GM12878 (cell line): ENCODE measurements at regions of chr1 and their contacts with region 1.

Region 1: DNA sequence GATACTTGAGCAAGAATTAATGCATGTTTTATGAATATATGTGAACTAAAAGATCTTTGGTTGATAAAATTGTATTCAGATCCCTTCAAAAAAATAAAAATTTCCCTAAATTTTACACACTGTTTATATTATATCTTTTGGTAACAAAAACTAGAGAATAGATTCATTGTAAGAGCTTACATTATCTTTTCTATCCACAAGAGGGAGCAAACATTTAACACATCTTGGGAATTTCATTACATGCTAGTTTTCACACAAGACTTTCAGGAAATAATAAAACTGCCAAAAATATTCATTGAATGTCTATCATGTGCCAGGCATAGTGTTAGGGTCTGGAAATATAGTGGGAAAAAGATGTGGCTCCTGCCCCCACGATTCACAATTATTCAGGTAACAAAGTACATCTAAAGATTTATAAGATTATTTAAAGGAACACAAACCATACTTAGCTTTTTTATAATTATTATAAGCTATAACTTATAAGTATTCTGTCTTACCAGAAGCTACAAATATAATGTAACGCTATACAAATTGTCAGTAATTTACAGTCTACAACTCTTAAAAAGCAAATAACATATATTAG is 30.6 kb downstream of the FAF1 start:
- DNase-seq: no peak
- ATAC-seq: no peak; the same call in 2 of the 3 replicates
- H3K4me3 ChIP-seq: no peak overlapping the region
- H3K27ac ChIP-seq: no peak overlapping the region
- H3K4me1 ChIP-seq: peaks cover 3% of the 10 kb centered on the region
- H3K27me3 ChIP-seq: no peaks in the 10 kb centered on the region
- CTCF ChIP-seq: peak; percentile 29 to 53 (median 45); a peak in 4 of 6 replicates
- EP300 ChIP-seq: no peak
- POLR2A ChIP-seq: no peak
- RAD21 ChIP-seq: peak; percentile 52

Region 2: DNA sequence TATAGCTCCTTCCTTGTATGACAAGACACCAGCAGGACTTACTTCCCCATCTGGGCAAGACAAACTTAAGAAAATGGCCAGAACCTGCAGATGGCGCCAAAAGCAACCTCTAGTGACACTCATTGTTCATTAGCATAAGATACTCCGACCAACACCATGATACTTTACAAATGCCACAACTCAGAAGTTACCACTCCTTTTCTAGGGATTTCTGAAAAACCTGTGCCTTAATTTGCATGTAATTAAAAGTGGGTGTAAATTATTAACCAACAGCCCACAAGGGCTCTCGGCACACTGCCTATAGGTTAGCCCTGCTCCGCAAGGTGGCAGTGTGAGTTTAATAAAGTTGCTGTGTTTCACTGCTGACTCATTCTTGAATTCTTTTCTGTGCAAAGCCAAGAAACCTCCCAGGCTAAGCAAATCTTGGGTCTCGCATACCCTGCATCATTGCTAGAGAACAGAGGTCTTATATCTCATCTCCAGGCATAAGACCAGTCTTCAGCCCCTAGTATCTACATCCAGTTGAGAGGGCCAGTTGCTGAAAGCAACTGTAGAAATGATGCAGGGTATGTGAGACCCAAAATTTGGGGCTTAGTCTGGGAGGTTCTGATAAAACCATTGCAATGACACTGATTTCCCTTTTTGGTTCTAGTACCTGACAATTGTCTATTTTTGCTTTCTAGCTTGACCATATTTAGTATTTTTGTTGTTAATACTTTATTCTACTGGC is 55.8 kb before region 1 on chr1:
- CTCF ChIA-PET with region 1: interaction called, 28 read pairs
- POLR2A ChIA-PET with region 1: no interaction called
- RAD21 ChIA-PET with region 1: interaction called, 3 read pairs
- SMC1A ChIA-PET with region 1: interaction called, 4 read pairs
- in situ Hi-C with region 1: no loop called
- intact Hi-C with region 1: no loop called
- DNase-seq: peak; percentile 76
- ATAC-seq: peak; percentile 99
- H3K4me3 ChIP-seq: no peak overlapping the region
- H3K27ac ChIP-seq: peak overlapping the region; percentile 29; the same call in 1 of the 2 replicates
- H3K4me1 ChIP-seq: peaks cover 9% of the 10 kb centered on the region
- H3K27me3 ChIP-seq: no peaks in the 10 kb centered on the region
- CTCF ChIP-seq: peak; percentile 62 to 90 (median 62)
- EP300 ChIP-seq: no peak
- POLR2A ChIP-seq: no peak
- RAD21 ChIP-seq: peak; percentile 73

Region 3: DNA sequence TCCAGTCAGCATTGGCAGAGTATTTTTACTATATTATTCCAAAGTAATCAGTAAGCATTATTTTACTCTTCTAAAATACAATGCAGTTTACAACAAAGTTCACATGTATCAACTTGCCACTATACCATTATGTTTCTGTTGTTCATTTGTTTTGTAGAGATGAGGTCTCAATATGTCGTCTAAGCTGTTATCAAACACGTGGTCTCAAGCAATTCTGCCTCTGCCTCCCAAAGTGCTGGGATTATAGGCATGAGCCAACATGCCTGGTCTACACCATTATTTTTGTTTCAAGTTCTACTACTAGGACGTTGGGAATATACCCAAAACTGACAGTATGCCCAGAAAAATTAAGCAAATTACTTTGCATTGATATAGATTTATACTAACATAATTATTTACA is 10.8 kb after region 1 on chr1:
- CTCF ChIA-PET with region 1: interaction called, 19 read pairs
- POLR2A ChIA-PET with region 1: no interaction called
- RAD21 ChIA-PET with region 1: no interaction called
- SMC1A ChIA-PET with region 1: interaction called, 6 read pairs
- in situ Hi-C with region 1: no loop called
- intact Hi-C with region 1: no loop called
- DNase-seq: no peak
- ATAC-seq: no peak
- H3K4me3 ChIP-seq: no peak overlapping the region
- H3K27ac ChIP-seq: no peak overlapping the region
- H3K4me1 ChIP-seq: no peaks in the 10 kb centered on the region
- H3K27me3 ChIP-seq: no peaks in the 10 kb centered on the region
- CTCF ChIP-seq: no peak
- EP300 ChIP-seq: no peak
- POLR2A ChIP-seq: no peak
- RAD21 ChIP-seq: no peak

Region 4: DNA sequence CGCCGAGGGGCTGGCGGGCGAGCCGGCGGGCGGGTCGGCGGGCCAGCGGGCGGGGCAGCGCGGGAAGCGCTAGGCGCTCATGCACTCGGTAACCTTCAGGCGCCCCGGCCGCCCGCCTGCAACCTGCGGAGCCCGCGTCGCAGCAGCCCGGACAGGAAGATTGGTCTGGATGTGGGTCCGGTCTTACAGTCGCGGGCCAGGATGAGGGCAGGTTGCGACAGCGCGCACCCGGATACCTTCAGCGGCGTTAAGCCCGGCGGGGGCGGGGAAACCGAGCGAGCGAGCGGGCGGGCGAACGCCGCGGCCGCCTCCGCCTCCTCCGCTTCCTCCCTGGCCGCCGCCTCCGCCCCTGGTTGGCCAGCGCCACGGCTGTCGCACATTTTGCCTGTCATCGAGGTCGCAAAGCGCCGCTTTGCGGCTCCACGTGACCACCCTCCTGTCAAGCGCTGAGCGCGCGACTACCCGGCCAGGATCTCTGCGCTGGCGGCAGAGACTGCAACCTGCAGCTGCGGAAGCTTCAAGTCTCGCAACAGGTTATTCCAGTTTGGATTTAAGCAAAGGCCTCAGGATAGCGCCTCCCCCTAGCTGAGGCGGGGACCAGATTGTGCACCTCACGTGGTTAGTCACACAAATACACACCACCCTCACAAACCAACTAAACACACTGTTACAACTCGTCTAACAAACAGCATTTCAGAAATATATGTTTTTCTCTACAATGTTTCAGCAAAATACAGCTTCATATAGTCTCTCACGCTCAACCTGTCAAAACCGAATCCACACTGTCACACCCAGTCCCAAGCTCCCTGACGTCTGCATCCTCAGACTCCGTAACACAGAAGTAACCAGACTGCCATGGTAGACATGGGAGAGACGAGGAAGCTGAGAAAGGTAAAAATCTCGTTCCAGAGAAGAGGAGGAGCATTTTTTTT is 30.7 kb after region 1 on chr1 and contains the start of gene FAF1:
- CTCF ChIA-PET with region 1: interaction called, 6 read pairs
- POLR2A ChIA-PET with region 1: no interaction called
- RAD21 ChIA-PET with region 1: no interaction called
- SMC1A ChIA-PET with region 1: interaction called, 18 read pairs
- in situ Hi-C with region 1: no loop called
- intact Hi-C with region 1: loop called (anchors 5 kb)
- DNase-seq: peak; percentile 83
- ATAC-seq: peak; percentile 96
- H3K4me3 ChIP-seq: peak within 1 kb of the TSS; percentile 93
- H3K27ac ChIP-seq: peak within 1 kb of the TSS; percentile 79
- H3K4me1 ChIP-seq: peaks cover under 1% of the 10 kb centered on the region; the same call in 1 of the 2 replicates
- H3K27me3 ChIP-seq: no peaks in the 10 kb centered on the region
- CTCF ChIP-seq: peak in 1 of 3 experiments; percentile 16; a peak in 1 of 6 replicates
- EP300 ChIP-seq: peak; percentile 40 to 49; a peak in 2 of 4 replicates
- POLR2A ChIP-seq: peak; percentile 94
- RAD21 ChIP-seq: no peak
- polyA plus RNA-seq, gene FAF1: 14.0 to 24.6 TPM